WTC11 (cell line): ENCODE measurements at regions of chr1 and their contacts with region 1.

Region 1: DNA sequence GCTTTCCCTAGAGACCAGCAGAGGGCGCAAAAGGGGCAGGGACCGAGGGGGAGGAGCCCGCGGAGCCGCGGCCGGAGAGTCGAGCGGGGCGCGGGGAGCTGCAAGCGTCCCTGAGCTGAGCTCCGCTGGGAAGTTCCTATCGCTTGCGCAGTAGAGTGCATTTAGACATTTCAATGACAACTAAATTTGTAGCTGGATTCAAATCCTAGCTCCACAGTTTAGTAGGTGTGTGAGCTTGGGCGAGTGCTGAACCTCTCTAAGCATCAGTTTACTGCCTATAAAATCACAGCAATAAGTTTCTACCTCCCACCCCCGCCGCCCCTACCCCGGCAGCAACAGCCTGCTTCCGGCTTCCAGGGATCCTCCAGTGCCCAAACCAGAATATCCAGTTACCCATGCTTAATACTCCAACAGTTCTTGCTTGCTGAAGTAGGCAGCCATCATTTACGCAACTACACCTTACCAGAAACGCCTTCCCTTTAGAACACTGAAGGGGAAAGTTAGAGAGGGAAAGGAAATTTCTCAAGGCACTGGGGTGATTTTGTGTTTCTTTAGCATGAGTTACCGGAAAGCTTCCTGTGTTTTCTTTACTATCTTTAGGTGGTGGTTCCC is 9.1 kb downstream of the TLR5 start:
- DNase-seq: peak; percentile 91
- ATAC-seq: peak; percentile 78
- H3K4me3 Mint-ChIP-seq: peak overlapping the region; percentile 69
- H3K27ac Mint-ChIP-seq: peak overlapping the region; percentile 85
- H3K4me1 Mint-ChIP-seq: peaks cover 43% of the 10 kb centered on the region
- H3K27me3 Mint-ChIP-seq: peaks cover 40% of the 10 kb centered on the region
- CTCF ChIP-seq: no peak; the same call in none of the 2 replicates

Region 2: GRCh38 chr1:222697826-222698225 is 436.1 kb before region 1 on chr1:
- CTCF ChIA-PET with region 1: no interaction called
- POLR2A ChIA-PET with region 1: no interaction called
- DNase-seq: no peak
- ATAC-seq: no peak
- H3K4me3 Mint-ChIP-seq: no peak overlapping the region
- H3K27ac Mint-ChIP-seq: no peak overlapping the region
- H3K4me1 Mint-ChIP-seq: no peaks in the 10 kb centered on the region
- H3K27me3 Mint-ChIP-seq: no peaks in the 10 kb centered on the region
- CTCF ChIP-seq: no peak

Region 3: GRCh38 chr1:222914861-222915632 is 218.9 kb before region 1 on chr1:
- CTCF ChIA-PET with region 1: no interaction called
- POLR2A ChIA-PET with region 1: no interaction called
- DNase-seq: no peak
- ATAC-seq: no peak
- H3K4me3 Mint-ChIP-seq: no peak overlapping the region
- H3K27ac Mint-ChIP-seq: no peak overlapping the region
- H3K4me1 Mint-ChIP-seq: no peaks in the 10 kb centered on the region
- H3K27me3 Mint-ChIP-seq: peaks cover 4% of the 10 kb centered on the region; the same call in 1 of the 2 replicates
- CTCF ChIP-seq: no peak

Region 4: GRCh38 chr1:223081181-223081994 is 52.5 kb before region 1 on chr1:
- CTCF ChIA-PET with region 1: interaction called, 12 read pairs
- POLR2A ChIA-PET with region 1: no interaction called
- DNase-seq: peak; percentile 95
- ATAC-seq: peak; percentile 93
- H3K4me3 Mint-ChIP-seq: no peak overlapping the region
- H3K27ac Mint-ChIP-seq: peak overlapping the region; percentile 75; the same call in 1 of the 2 replicates
- H3K4me1 Mint-ChIP-seq: peaks cover 33% of the 10 kb centered on the region
- H3K27me3 Mint-ChIP-seq: peaks cover 72% of the 10 kb centered on the region
- CTCF ChIP-seq: peak; percentile 82

Region 5: DNA sequence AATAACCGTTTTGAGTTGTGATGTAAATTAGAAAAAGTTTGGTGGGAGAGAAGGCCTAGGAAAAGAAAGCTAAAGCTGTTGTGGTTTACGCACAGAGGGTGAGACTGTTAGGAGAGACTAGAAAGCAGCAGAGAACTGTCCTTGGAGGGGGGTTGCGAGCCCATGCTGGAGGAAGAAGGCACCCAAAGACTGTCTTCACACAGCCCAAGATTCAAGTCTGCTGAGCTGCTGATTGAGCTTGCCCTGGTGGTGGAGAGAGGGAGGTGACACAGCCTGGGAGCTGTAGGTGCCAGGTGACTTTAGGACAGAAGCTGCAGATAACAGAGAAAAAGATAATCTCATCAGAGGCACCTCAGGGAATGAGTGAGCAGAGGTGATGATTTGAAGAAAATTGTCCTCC is 27.4 kb after region 1 on chr1:
- CTCF ChIA-PET with region 1: interaction called, 23 read pairs
- POLR2A ChIA-PET with region 1: no interaction called
- DNase-seq: no peak
- ATAC-seq: peak; percentile 85
- H3K4me3 Mint-ChIP-seq: no peak overlapping the region
- H3K27ac Mint-ChIP-seq: no peak overlapping the region
- H3K4me1 Mint-ChIP-seq: peaks cover 7% of the 10 kb centered on the region; the same call in 1 of the 2 replicates
- H3K27me3 Mint-ChIP-seq: peaks cover 13% of the 10 kb centered on the region
- CTCF ChIP-seq: no peak

Region 6: GRCh38 chr1:223345720-223346119 is 211.8 kb after region 1 on chr1:
- CTCF ChIA-PET with region 1: interaction called, 16 read pairs
- POLR2A ChIA-PET with region 1: no interaction called
- DNase-seq: no peak
- ATAC-seq: peak; percentile 95
- H3K4me3 Mint-ChIP-seq: no peak overlapping the region
- H3K27ac Mint-ChIP-seq: no peak overlapping the region
- H3K4me1 Mint-ChIP-seq: 0 out of 2 replicates have a peak, but pooled peaks cover 3% of the 10 kb centered on the region
- H3K27me3 Mint-ChIP-seq: no peaks in the 10 kb centered on the region
- CTCF ChIP-seq: no peak

Region 7: DNA sequence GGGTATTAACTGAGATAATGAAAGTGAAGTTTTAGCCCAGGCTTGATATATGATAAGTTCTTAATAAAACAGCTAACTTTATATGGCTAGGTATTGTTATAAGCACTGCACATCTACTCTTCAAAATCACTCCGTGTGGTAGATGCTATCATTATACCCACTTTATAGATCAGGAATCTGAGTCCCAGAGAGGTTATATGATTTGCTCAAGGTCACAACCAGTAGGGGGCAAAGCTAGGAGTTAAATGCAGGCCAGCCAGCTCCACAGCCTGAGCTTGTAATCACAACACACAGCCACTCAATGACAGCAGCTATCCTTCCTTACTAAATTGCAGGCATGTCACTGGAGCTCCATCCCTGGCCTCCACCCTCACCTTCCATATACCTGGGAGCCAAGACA is 415.8 kb after region 1 on chr1:
- CTCF ChIA-PET with region 1: interaction called, 10 read pairs
- POLR2A ChIA-PET with region 1: no interaction called
- DNase-seq: no peak
- ATAC-seq: no peak
- H3K4me3 Mint-ChIP-seq: no peak overlapping the region
- H3K27ac Mint-ChIP-seq: no peak overlapping the region
- H3K4me1 Mint-ChIP-seq: peaks cover 7% of the 10 kb centered on the region
- H3K27me3 Mint-ChIP-seq: no peaks in the 10 kb centered on the region
- CTCF ChIP-seq: no peak

Region 8: GRCh38 chr1:223695941-223696340 is 562.0 kb after region 1 on chr1:
- CTCF ChIA-PET with region 1: interaction called, 10 read pairs
- POLR2A ChIA-PET with region 1: no interaction called
- DNase-seq: no peak
- ATAC-seq: no peak
- H3K4me3 Mint-ChIP-seq: no peak overlapping the region
- H3K27ac Mint-ChIP-seq: no peak overlapping the region
- H3K4me1 Mint-ChIP-seq: no peaks in the 10 kb centered on the region; the same call in 1 of the 2 replicates
- H3K27me3 Mint-ChIP-seq: no peaks in the 10 kb centered on the region; the same call in 1 of the 2 replicates
- CTCF ChIP-seq: no peak